CD4-positive, alpha-beta memory T cell (primary cell): ENCODE measurements at regions of chr2 and their contacts with region 1.

Region 1: GRCh38 chr2:151999053-151999452 is 99.8 kb downstream of the CACNB4 start:
- DNase-seq: peak in 4 of 5 donors; percentile 7 to 30 (median 26)
- H3K4me3 ChIP-seq: no peak overlapping the region
- H3K4me3 Mint-ChIP-seq: no peak overlapping the region
- H3K27ac ChIP-seq: no peak overlapping the region
- H3K27ac Mint-ChIP-seq: no peak overlapping the region
- H3K4me1 ChIP-seq: no peaks in the 10 kb centered on the region
- H3K4me1 Mint-ChIP-seq: peaks cover 0 to under 1% (median 0%) of the 10 kb centered on the region in 4 donors
- H3K27me3 ChIP-seq: no peaks in the 10 kb centered on the region
- H3K27me3 Mint-ChIP-seq: peaks cover 0 to 5% of the 10 kb centered on the region in 2 donors

Region 2: GRCh38 chr2:152012697-152013096 is 13.6 kb after region 1 on chr2:
- CTCF ChIA-PET with region 1: interaction called, 16 read pairs
- POLR2A ChIA-PET with region 1: no interaction called
- intact Hi-C with region 1: no loop called
- DNase-seq: no peak
- H3K4me3 ChIP-seq: no peak overlapping the region
- H3K4me3 Mint-ChIP-seq: no peak overlapping the region
- H3K27ac ChIP-seq: no peak overlapping the region
- H3K27ac Mint-ChIP-seq: no peak overlapping the region
- H3K4me1 ChIP-seq: no peaks in the 10 kb centered on the region
- H3K4me1 Mint-ChIP-seq: no peaks in the 10 kb centered on the region
- H3K27me3 ChIP-seq: no peaks in the 10 kb centered on the region
- H3K27me3 Mint-ChIP-seq: peaks cover 8 to 9% of the 10 kb centered on the region in 2 donors